MCF 10A (cell line): ENCODE measurements at regions of chr12 and their contacts with region 1.

Region 1: DNA sequence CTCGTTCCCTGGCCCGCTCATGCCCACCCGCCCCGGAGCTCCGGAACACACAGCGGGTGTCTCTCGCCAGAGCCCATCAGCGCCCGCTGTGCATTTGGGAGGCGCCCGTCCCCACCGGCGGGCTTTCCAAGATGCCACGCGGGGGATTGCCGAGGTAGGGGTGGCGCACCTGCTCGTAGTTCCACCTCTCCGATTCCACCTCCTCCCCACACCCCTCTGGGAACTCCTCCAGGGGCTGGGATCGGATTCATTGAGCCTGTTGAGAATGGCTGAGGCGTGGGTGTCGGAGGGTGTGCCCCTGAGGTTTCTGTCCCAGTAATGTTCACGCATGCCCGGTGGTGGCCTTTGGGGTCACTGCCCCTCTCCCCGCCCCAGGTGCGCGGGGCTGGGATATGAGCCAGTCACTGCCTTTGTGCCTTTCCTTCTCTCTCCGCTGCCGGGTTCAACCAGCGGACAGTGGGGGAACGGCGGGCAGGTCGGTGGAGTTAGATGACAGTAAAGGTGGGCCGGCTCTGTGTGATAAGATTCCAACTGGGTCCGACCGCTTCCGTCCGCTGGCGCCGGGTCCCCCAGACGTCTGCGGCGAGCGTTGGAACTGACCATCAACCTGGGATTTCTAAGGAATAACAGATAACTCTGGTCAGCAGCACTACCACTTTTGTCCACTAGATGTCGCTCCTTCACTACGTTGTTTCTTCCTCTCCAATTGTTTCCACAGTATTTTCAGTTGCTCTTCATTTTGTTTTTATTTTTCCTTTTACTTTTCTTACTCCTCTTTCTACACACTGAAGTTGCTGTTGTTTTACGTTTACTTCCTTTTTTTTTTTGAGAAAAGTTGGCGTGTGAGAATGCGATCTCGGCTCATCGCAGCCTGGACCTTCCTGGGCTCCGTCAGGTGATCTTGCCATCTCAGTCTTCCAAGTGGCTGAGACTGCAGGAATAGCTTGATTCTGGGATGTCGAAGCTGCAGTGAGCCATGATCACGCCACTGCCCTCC is 178.1 kb upstream of the ALG10B start:
- DNase-seq: peak; percentile 81
- H3K4me3 Mint-ChIP-seq: peak overlapping the region; percentile 73
- H3K27ac Mint-ChIP-seq: peak overlapping the region; percentile 17
- H3K4me1 Mint-ChIP-seq: peaks cover 11% of the 10 kb centered on the region
- H3K27me3 Mint-ChIP-seq: no peaks in the 10 kb centered on the region
- CTCF ChIP-seq: peak; percentile 94

Region 2: DNA sequence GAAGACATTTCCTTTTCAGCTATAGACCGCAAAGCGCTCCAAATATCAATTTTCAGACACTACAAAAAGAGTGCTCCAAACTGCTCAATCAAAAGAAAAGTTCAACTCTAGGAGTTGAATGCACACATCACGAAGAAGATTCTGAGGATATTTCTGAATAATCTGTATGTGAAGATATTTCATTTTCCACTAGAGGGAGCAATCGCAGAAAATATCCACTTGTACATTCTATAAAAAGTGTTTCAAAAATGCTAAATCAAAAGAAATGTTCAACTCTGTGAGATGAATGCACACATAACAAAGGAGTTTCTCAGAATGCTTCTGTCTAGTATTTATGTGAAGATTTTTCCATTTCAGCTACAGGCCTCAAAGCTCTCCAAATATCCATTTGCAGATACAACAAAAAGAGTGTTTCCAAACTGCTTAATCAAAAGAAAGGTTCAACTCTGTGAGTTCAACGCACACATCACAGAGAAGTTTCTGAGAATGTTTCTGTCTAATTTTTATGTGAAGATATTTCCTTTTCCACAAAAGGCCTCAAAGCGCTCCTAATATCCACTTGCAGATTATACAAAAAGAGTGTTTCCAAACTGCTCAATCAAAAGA is 465.8 kb before region 1 on chr12:
- CTCF ChIA-PET with region 1: interaction called, 3 read pairs
- POLR2A ChIA-PET with region 1: no interaction called
- intact Hi-C with region 1: loop called (anchors 10 kb)
- DNase-seq: peak; percentile 20
- H3K4me3 Mint-ChIP-seq: no peak overlapping the region
- H3K27ac Mint-ChIP-seq: no peak overlapping the region
- H3K4me1 Mint-ChIP-seq: no peaks in the 10 kb centered on the region
- H3K27me3 Mint-ChIP-seq: no peaks in the 10 kb centered on the region
- CTCF ChIP-seq: peak; percentile 22

Region 3: DNA sequence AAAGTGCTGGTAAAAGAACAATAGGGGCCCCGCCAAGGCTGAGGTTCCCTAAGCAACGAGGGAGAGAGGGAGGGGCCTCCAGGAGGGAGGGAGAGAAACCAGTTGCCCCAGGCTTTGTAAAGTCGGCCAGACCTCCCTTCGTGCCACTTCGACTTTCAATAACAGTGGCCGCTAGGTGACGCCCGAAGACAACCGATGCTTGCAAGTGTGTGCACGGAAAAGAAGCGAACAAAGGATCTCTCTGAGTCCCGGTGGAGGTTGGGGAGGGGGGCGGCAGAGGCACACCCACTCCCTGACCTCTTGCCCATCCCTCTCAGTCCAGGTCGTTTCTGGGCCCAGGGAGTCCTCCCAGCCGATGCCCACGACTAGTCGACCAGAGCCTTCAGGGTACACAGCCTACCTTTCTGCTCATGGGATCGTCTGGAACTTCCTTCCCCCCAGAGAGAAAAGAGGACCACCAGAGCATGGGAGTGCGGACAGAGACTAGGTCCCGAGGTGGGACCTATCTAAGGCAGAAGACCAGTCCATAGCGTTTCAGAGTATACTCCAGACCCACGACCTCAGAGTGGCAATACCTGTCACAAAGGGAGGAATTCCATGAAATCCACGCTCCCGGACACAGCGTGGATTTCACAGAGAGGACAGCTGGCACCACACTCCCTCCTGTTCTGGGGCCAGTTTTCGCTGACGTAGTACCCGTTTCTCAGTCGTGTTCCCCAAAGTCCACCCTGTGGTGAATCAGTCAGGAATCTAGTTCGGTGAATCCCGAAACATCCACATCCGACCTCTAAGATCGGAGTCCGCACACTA is 84.7 kb before region 1 on chr12:
- CTCF ChIA-PET with region 1: no interaction called
- POLR2A ChIA-PET with region 1: no interaction called
- intact Hi-C with region 1: loop called (anchors 1 kb)
- DNase-seq: peak; percentile 68
- H3K4me3 Mint-ChIP-seq: no peak overlapping the region
- H3K27ac Mint-ChIP-seq: no peak overlapping the region
- H3K4me1 Mint-ChIP-seq: peaks cover 8% of the 10 kb centered on the region
- H3K27me3 Mint-ChIP-seq: no peaks in the 10 kb centered on the region
- CTCF ChIP-seq: peak; percentile 47